CD4-positive, alpha-beta T cell (primary cell): ENCODE measurements at regions of chr6 and their contacts with region 1.

Region 1: DNA sequence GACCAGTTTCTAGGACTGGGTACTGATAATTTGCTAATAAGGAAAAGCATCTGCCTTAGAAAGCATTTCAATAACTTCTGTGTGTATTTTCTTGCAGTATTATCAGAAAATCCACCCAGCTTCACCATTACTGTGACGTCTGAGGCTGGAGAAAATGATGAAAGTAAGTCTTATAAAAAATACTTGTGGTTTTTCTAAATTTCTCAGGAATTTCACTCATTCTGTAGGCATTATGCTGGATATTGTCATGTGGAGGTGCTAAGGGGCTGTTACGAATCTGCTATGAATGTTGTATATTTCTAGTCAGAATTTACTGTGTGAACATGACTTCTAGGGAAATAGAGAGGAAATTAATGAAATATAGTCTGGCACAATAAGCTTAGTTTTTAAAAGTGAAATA is 8.9 kb downstream of the RWDD1 start:
- DNase-seq: no peak
- ATAC-seq: no peak
- H3K4me3 ChIP-seq: no peak overlapping the region
- H3K4me3 Mint-ChIP-seq: no peak overlapping the region
- H3K27ac ChIP-seq: no peak overlapping the region
- H3K27ac Mint-ChIP-seq: no peak overlapping the region
- H3K4me1 ChIP-seq: no peaks in the 10 kb centered on the region
- H3K4me1 Mint-ChIP-seq: peaks cover 42% of the 10 kb centered on the region
- H3K27me3 ChIP-seq: no peaks in the 10 kb centered on the region
- H3K27me3 Mint-ChIP-seq: no peaks in the 10 kb centered on the region
- CTCF ChIP-seq: no peak

Region 2: DNA sequence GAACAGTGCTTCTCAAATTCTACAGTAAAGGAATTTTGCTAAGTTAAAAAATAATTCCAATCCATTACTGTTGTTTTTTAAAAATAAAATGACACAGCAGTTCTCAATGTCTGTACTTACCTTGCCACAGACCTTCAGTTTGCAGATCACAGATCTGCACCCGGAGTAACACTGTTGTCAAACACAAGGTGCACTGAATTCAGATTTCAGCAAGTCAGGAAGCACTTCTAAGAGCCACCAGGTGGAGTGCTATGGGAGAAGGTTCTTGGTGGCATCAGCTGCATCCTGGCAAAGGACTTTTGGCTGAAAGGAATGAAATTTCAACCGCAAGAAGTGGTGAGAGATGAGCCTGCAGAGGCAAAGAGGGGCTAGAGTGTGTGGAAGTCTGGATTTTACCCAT is 53.5 kb after region 1 on chr6:
- CTCF ChIA-PET with region 1: no interaction called
- POLR2A ChIA-PET with region 1: no interaction called
- intact Hi-C with region 1: loop called in 1 of 2 experiments (anchors 10 kb)
- DNase-seq: no peak
- ATAC-seq: no peak
- H3K4me3 ChIP-seq: no peak overlapping the region
- H3K4me3 Mint-ChIP-seq: no peak overlapping the region
- H3K27ac ChIP-seq: no peak overlapping the region
- H3K27ac Mint-ChIP-seq: no peak overlapping the region
- H3K4me1 ChIP-seq: no peaks in the 10 kb centered on the region
- H3K4me1 Mint-ChIP-seq: no peaks in the 10 kb centered on the region
- H3K27me3 ChIP-seq: no peaks in the 10 kb centered on the region
- H3K27me3 Mint-ChIP-seq: no peaks in the 10 kb centered on the region
- CTCF ChIP-seq: no peak

Region 3: DNA sequence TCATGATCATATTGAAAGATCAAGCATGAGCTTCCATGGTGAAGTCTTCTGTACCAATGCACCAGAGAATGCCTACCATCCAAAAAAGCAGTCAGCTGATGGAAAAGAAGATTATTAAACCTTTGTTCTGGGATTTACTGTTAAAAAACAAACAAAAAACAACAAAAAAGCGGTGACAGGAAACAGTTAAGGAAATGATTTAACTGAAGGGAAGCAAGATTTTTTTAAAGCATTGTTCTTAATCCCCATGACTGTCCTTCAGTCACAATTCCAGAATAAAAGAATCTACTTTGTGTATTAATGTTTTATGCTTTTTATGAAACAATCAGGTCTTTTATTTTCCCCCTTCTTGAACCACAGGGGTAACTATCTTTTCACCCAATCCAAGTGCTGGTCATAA is 161.4 kb after region 1 on chr6:
- CTCF ChIA-PET with region 1: no interaction called
- POLR2A ChIA-PET with region 1: no interaction called
- intact Hi-C with region 1: no loop called
- DNase-seq: no peak
- ATAC-seq: no peak
- H3K4me3 ChIP-seq: no peak overlapping the region
- H3K4me3 Mint-ChIP-seq: no peak overlapping the region
- H3K27ac ChIP-seq: no peak overlapping the region
- H3K27ac Mint-ChIP-seq: no peak overlapping the region
- H3K4me1 ChIP-seq: no peaks in the 10 kb centered on the region
- H3K4me1 Mint-ChIP-seq: no peaks in the 10 kb centered on the region
- H3K27me3 ChIP-seq: no peaks in the 10 kb centered on the region
- H3K27me3 Mint-ChIP-seq: no peaks in the 10 kb centered on the region
- CTCF ChIP-seq: no peak

Region 4: DNA sequence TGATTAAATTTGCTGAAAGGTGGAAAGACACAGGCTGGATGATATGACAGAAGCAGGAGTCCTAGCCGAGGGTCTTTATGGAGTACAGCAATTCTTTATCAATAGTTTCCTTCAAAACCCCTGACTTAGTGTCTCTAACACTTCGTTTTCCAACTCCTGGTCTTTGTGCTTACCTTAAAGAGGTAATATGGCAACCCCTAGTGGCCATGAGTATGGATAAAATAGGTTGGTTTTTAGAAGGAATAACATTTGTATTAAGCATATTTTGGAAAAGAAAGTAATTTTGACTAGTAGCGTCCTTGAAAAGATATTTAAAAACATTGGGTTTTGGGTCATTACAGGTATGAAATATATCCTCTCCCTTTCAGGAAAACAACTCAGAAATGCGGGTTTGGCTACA is 737.1 kb after region 1 on chr6:
- CTCF ChIA-PET with region 1: no interaction called
- POLR2A ChIA-PET with region 1: no interaction called
- intact Hi-C with region 1: no loop called
- DNase-seq: peak in 1 of 14 experiments; percentile 2
- ATAC-seq: no peak
- H3K4me3 ChIP-seq: no peak overlapping the region
- H3K4me3 Mint-ChIP-seq: no peak overlapping the region
- H3K27ac ChIP-seq: no peak overlapping the region
- H3K27ac Mint-ChIP-seq: no peak overlapping the region
- H3K4me1 ChIP-seq: no peaks in the 10 kb centered on the region
- H3K4me1 Mint-ChIP-seq: no peaks in the 10 kb centered on the region
- H3K27me3 ChIP-seq: no peaks in the 10 kb centered on the region
- H3K27me3 Mint-ChIP-seq: peaks cover 12% of the 10 kb centered on the region
- CTCF ChIP-seq: no peak